Activated T-helper 1 cell treated with anti-CD3 and anti-CD28 coated beads, Interleukin-12 subunit alpha, Interleukin-12 subunit beta, Interleukin-2, Interleukin-4 antibody, amounts not matched to agents 30 ng/mL and 10 ng/mL and 1 ng/mL, durations not matched to agents 14 hours and 24 hours and 36 hours (primary cell): ENCODE measurements at regions of chr9 and their contacts with region 1.

Region 1: GRCh38 chr9:128275996-128276573 is at the starts of genes GOLGA2 and SWI5:
- DNase-seq: peak; percentile 100
- H3K4me3 Mint-ChIP-seq: peak within 1 kb of the TSS; percentile 98
- H3K27ac Mint-ChIP-seq: peak within 1 kb of the TSS; percentile 91
- H3K4me1 Mint-ChIP-seq: peaks cover 54% of the 10 kb centered on the region
- H3K27me3 Mint-ChIP-seq: no peaks in the 10 kb centered on the region
- total RNA-seq, gene GOLGA2: 52.3 and 53.0 TPM in 2 replicates
- total RNA-seq, gene SWI5: 10.4 and 13.3 TPM in 2 replicates

Region 2: GRCh38 chr9:127785023-127785932 is 490.8 kb before region 1 on chr9:
- intact Hi-C with region 1: no loop called
- DNase-seq: peak; percentile 87
- H3K4me3 Mint-ChIP-seq: peak overlapping the region; percentile 96
- H3K27ac Mint-ChIP-seq: peak overlapping the region; percentile 99
- H3K4me1 Mint-ChIP-seq: peaks cover 67% of the 10 kb centered on the region
- H3K27me3 Mint-ChIP-seq: no peaks in the 10 kb centered on the region

Region 3: GRCh38 chr9:127930231-127931091 is 345.6 kb before region 1 on chr9 and contains the start of gene PIP5KL1:
- intact Hi-C with region 1: no loop called
- DNase-seq: peak; percentile 74
- H3K4me3 Mint-ChIP-seq: peak within 1 kb of the TSS; percentile 68
- H3K27ac Mint-ChIP-seq: peak within 1 kb of the TSS; percentile 36
- H3K4me1 Mint-ChIP-seq: peaks cover 31% of the 10 kb centered on the region
- H3K27me3 Mint-ChIP-seq: peaks cover 9% of the 10 kb centered on the region
- total RNA-seq, gene PIP5KL1: 1.1 and 1.2 TPM in 2 replicates

Region 4: GRCh38 chr9:128114326-128115186 is 161.5 kb before region 1 on chr9:
- intact Hi-C with region 1: no loop called
- DNase-seq: no peak
- H3K4me3 Mint-ChIP-seq: no peak overlapping the region
- H3K27ac Mint-ChIP-seq: no peak overlapping the region
- H3K4me1 Mint-ChIP-seq: peaks cover 12% of the 10 kb centered on the region
- H3K27me3 Mint-ChIP-seq: no peaks in the 10 kb centered on the region

Region 5: DNA sequence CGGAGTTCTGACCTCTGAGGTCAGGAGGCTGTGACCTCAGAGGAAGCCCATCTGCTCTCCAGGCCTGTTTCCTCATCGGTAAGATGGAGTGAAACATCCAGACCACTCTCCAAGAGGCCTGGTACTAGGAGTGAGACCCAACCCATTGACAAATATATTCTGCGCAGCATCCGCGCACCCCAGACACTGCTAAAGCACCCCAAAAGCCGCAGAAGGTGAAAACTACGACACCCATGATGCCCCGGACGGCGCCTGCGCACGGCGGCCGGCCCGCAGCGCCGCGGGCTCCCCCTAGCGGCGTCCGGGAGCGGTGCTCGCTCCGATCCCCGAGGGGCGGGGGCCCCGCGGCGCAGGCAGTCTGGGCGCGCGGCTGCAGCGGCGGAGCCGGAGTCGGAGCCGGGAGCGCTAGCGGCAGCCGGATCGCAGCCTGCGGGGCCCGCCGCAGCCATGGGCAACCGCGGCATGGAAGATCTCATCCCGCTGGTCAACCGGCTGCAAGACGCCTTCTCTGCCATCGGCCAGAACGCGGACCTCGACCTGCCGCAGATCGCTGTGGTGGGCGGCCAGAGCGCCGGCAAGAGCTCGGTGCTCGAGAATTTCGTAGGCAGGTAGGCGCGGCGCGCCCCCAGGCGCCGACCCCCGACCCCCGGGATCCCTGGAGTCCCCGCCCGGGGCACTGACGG is 72.9 kb before region 1 on chr9 and contains the start of gene DNM1:
- intact Hi-C with region 1: loop called (anchors 5 kb)
- DNase-seq: peak; percentile 75
- H3K4me3 Mint-ChIP-seq: peak within 1 kb of the TSS; percentile 78
- H3K27ac Mint-ChIP-seq: peak within 1 kb of the TSS; percentile 83
- H3K4me1 Mint-ChIP-seq: peaks cover 21% of the 10 kb centered on the region
- H3K27me3 Mint-ChIP-seq: peaks cover 27% of the 10 kb centered on the region
- total RNA-seq, gene DNM1: 1.4 and 1.8 TPM in 2 replicates

Region 6: GRCh38 chr9:128339771-128340690 is 63.9 kb after region 1 on chr9 and contains the start of gene SLC27A4:
- intact Hi-C with region 1: loop called (anchors 1 kb)
- DNase-seq: peak; percentile 82
- H3K4me3 Mint-ChIP-seq: peak within 1 kb of the TSS; percentile 94
- H3K27ac Mint-ChIP-seq: peak within 1 kb of the TSS; percentile 88
- H3K4me1 Mint-ChIP-seq: peaks cover 6% of the 10 kb centered on the region
- H3K27me3 Mint-ChIP-seq: no peaks in the 10 kb centered on the region
- total RNA-seq, gene SLC27A4: 41.8 and 43.2 TPM in 2 replicates

Region 7: GRCh38 chr9:128455849-128456612 is 179.9 kb after region 1 on chr9 and contains the start of gene ODF2:
- intact Hi-C with region 1: loop called (anchors 1 kb)
- DNase-seq: peak; percentile 98
- H3K4me3 Mint-ChIP-seq: peak within 1 kb of the TSS; percentile 93
- H3K27ac Mint-ChIP-seq: peak within 1 kb of the TSS; percentile 98
- H3K4me1 Mint-ChIP-seq: peaks cover 13% of the 10 kb centered on the region
- H3K27me3 Mint-ChIP-seq: peaks cover 3% of the 10 kb centered on the region
- total RNA-seq, gene ODF2: 55.6 and 57.6 TPM in 2 replicates